CD8-positive, alpha-beta memory T cell (primary cell): ENCODE measurements at regions of chr10 and their contacts with region 1.

Region 1: DNA sequence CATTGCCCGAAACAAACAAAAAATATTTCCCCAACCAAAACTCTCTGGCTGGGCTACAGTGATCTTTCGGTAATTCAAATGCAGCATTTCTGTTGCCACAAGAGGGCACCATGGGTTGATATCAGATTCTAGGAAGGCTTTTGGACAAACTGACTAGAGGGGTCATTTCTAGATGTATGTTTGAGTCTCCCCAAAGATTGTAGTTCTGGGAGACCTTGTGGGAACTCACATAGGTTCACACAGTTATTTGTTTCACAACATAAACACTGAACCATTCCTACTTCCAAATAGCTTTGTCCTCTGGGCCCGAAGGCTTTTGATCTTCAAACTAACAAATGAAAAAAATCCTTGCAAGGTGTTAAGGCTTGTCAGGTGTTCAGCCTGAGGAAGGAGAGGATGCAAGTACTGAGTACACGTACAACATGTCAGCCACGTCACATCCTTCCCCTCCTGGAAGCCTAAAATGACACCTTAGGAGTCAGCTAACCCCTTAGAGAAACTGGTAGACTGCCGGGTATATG is 37.0 kb upstream of the IL15RA start:
- DNase-seq: peak; percentile 29 to 79 (median 77)
- H3K4me3 ChIP-seq: no peak overlapping the region
- H3K4me3 Mint-ChIP-seq: peak overlapping the region in 5 of 7 donors; percentile 22 to 73 (median 56)
- H3K27ac ChIP-seq: no peak overlapping the region
- H3K27ac Mint-ChIP-seq: peak overlapping the region; percentile 85 to 98 (median 96)
- H3K4me1 ChIP-seq: peaks cover 12% of the 10 kb centered on the region
- H3K4me1 Mint-ChIP-seq: peaks cover 14 to 19% (median 16%) of the 10 kb centered on the region in 3 donors
- H3K27me3 ChIP-seq: no peaks in the 10 kb centered on the region
- H3K27me3 Mint-ChIP-seq: peaks cover under 1 to 3% of the 10 kb centered on the region in 2 donors

Region 2: DNA sequence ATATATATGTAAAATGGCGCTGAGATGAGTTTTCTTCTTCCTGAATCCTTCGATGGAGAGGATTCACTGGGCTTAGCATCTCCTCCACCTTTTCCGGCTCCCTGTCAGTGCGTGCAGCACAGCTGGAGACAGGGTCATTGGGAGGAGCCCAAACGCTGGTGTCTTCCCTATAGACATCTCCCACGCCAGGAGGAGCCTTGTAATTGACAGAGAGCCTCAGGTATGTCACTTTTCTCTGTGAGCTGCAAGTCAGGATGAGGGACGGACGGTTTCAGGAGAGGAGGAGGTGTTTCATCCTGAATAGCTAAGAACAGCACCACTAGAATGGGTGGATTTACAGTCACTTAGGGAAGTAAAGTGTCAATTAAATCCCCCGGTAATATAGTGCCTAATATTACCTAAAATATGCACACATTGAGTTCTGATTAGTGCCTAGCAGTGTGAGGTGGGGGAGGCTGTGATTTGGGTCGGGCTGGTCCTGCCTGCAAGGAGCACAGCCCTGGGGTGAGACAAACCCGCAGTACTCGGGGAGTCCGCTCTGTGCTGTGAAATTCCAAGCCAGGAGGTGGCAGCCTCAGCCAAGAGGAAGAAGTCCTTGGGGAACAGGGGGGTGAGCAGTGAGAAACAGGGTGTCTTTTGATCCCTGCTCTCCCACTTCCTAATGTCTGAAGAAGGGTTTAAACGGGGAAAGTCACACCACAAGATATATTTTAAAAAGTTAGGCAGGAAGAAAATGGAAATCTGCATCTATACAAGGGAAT is 65.1 kb before region 1 on chr10:
- CTCF ChIA-PET with region 1: no interaction called
- POLR2A ChIA-PET with region 1: no interaction called
- DNase-seq: no peak
- H3K4me3 ChIP-seq: no peak overlapping the region
- H3K4me3 Mint-ChIP-seq: no peak overlapping the region
- H3K27ac ChIP-seq: no peak overlapping the region
- H3K27ac Mint-ChIP-seq: peak overlapping the region in 1 of 8 donors; percentile 29
- H3K4me1 ChIP-seq: no peaks in the 10 kb centered on the region
- H3K4me1 Mint-ChIP-seq: peaks cover 5 to 8% (median 7%) of the 10 kb centered on the region in 3 donors
- H3K27me3 ChIP-seq: no peaks in the 10 kb centered on the region
- H3K27me3 Mint-ChIP-seq: no peaks in the 10 kb centered on the region

Region 3: DNA sequence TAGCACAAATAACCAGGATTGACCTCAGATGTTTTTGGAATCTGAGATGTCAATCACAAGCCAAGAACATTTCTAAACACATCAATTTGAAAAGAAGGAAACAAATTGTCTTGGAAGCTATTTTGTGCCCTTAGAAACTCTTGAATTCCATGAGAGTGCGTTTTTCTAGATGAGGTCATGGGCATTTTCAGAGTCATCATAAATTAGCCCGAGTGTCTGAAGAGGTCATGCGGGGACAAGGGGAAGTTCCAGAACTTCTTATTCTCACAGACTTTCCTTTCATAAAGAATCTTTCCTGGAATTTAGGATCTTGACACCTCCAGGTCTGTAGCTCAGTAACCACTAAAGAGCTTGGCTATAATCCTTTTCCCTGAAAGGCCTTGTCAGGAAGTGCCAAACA is 19.7 kb after region 1 on chr10:
- CTCF ChIA-PET with region 1: interaction called, 13 read pairs
- POLR2A ChIA-PET with region 1: interaction called, 8 read pairs
- DNase-seq: no peak
- H3K4me3 ChIP-seq: no peak overlapping the region
- H3K4me3 Mint-ChIP-seq: no peak overlapping the region
- H3K27ac ChIP-seq: peak overlapping the region; percentile 46
- H3K27ac Mint-ChIP-seq: no peak overlapping the region
- H3K4me1 ChIP-seq: peaks cover 32% of the 10 kb centered on the region
- H3K4me1 Mint-ChIP-seq: peaks cover 33 to 42% (median 39%) of the 10 kb centered on the region in 3 donors
- H3K27me3 ChIP-seq: no peaks in the 10 kb centered on the region
- H3K27me3 Mint-ChIP-seq: no peaks in the 10 kb centered on the region

Region 4: DNA sequence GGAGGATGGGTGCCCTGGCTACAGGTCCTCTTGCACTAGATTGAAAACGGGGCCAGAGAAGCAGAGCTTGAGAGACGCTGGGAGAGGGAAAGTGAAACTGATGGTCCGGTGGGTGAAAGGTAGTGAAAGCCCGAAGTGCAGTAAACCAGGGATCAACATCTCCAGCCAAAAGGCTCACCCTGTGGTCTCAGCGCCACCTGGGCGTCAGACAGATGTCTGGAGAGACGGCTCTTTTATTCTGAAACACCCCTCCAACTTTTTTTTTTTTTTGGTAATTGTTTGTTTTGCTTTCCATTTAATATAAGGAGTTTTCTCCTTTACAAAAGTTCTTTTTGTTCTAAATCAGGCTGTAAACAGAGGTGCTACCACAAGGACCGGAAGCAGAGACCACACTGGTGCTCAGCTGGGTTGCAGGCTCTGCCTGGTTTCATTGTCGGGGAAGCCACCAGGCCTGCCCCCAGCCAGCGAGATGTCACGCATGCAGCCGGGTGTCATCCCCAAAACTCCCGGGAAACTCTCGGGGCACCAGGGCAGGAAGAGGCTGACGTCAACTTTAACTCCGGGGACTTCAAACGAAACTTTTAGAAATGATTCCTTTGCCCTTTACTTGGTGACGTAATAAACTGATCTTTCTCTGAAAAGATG is 36.6 kb after region 1 on chr10:
- CTCF ChIA-PET with region 1: interaction called, 52 read pairs
- POLR2A ChIA-PET with region 1: interaction called, 10 read pairs
- DNase-seq: peak; percentile 85 to 96 (median 92)
- H3K4me3 ChIP-seq: peak overlapping the region; percentile 80
- H3K4me3 Mint-ChIP-seq: peak overlapping the region; percentile 85 to 98 (median 95)
- H3K27ac ChIP-seq: peak overlapping the region; percentile 66
- H3K27ac Mint-ChIP-seq: peak overlapping the region; percentile 95 to 99 (median 98)
- H3K4me1 ChIP-seq: peaks cover 73% of the 10 kb centered on the region
- H3K4me1 Mint-ChIP-seq: peaks cover 74 to 90% (median 76%) of the 10 kb centered on the region in 3 donors
- H3K27me3 ChIP-seq: no peaks in the 10 kb centered on the region
- H3K27me3 Mint-ChIP-seq: peaks cover 0 to 2% of the 10 kb centered on the region in 2 donors

Region 5: GRCh38 chr10:6068422-6068821 is 54.1 kb after region 1 on chr10:
- CTCF ChIA-PET with region 1: interaction called, 11 read pairs
- POLR2A ChIA-PET with region 1: interaction called, 13 read pairs
- DNase-seq: peak in 2 of 5 donors; percentile 22 to 68
- H3K4me3 ChIP-seq: peak overlapping the region; percentile 33
- H3K4me3 Mint-ChIP-seq: peak overlapping the region in 3 of 7 donors; percentile 15 to 39 (median 24)
- H3K27ac ChIP-seq: no peak overlapping the region
- H3K27ac Mint-ChIP-seq: no peak overlapping the region
- H3K4me1 ChIP-seq: peaks cover 72% of the 10 kb centered on the region
- H3K4me1 Mint-ChIP-seq: peaks cover 40 to 78% (median 66%) of the 10 kb centered on the region in 3 donors
- H3K27me3 ChIP-seq: no peaks in the 10 kb centered on the region
- H3K27me3 Mint-ChIP-seq: peaks cover under 1 to 8% of the 10 kb centered on the region in 2 donors

Region 6: DNA sequence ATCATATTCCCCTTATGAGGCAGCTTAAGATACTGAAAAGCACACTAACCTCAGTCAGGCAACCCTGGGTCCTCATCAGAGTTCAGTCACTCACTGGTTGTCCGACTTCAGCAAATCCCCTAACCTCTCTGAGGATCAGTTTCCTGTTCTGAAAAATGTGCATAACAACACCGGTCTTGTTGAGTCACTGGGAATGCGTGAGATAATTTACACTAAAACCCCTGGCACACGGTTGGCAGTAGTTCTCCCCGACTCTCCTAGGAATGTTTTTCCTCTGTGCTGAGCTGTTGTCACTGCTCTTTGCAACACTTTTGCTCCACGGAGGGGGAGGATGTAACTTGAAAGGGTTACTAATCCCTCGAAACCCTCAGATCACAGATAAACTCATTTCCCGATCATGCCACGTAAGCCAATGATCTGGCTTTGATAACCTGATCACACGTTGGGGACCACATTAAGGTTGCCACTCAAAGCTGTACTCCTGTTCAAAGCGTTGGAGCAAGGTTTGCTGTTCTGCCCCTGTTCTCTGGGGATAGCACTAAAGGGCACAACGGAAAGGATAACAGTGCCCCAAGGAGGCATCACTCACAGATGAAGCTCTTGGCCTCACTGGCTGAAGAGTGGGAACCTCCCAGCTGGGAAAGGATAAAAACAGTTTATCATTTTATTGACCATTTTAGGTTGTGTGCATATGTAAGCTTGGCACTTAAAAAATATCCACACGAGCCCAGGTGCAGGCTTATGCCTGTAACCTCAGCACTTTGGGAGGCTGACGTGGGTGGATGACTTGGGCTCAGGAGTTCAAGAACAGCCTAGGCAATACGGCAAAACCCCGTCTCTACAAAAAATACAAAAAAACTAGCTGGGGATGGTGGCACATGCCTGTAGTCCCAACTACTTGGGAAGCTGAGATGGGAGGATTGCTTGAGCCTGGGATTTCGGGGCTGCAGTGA is 69.5 kb after region 1 on chr10:
- CTCF ChIA-PET with region 1: interaction called, 56 read pairs
- POLR2A ChIA-PET with region 1: interaction called, 12 read pairs
- DNase-seq: peak in 2 of 5 donors; percentile 13 to 48
- H3K4me3 ChIP-seq: no peak overlapping the region
- H3K4me3 Mint-ChIP-seq: peak overlapping the region in 6 of 7 donors; percentile 3 to 80 (median 44)
- H3K27ac ChIP-seq: no peak overlapping the region
- H3K27ac Mint-ChIP-seq: peak overlapping the region in 6 of 8 donors; percentile 2 to 69 (median 7)
- H3K4me1 ChIP-seq: peaks cover 37% of the 10 kb centered on the region
- H3K4me1 Mint-ChIP-seq: peaks cover 32 to 45% (median 41%) of the 10 kb centered on the region in 3 donors
- H3K27me3 ChIP-seq: no peaks in the 10 kb centered on the region
- H3K27me3 Mint-ChIP-seq: peaks cover 7 to 11% of the 10 kb centered on the region in 2 donors